Panc1 (cell line): ENCODE measurements at regions of chr9 and their contacts with region 1.

Region 1: GRCh38 chr9:83937911-83938323 is 16.7 kb upstream of the KIF27 start:
- DNase-seq: no peak
- ATAC-seq: peak; percentile 81
- H3K4me3 ChIP-seq: no peak overlapping the region
- H3K27ac ChIP-seq: no peak overlapping the region
- H3K4me1 ChIP-seq: no peaks in the 10 kb centered on the region
- H3K27me3 ChIP-seq: no peaks in the 10 kb centered on the region
- CTCF ChIP-seq: peak; percentile 68

Region 2: DNA sequence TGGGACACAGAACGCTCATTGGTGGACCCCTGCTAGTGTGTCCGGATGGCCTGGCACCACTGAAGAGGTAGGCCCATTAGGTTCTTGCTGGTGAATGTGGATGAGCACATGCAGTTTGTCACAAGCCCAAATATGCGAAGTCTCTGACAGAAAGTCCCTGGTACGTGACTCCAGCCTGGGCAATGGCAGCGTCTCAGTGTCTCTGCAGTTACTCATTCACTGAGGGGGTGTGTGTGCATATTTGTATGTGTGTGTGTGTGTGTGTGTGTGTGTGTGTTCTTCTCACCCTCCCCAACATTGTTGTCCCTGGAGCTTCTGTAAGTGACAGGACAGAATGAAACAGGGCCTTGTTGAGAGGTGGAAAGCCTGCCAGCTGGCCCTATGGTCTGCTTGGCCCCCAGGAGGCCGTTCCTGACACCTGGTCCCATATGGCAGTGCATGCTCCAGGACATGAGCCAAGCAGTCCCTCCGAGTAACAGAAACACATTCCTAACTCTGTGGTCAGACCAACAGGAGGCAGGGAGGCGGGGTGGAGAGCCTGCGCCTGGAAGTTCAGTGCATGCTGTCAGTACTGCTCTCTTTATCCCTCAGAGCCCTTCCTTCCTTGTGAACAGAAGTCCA is 232.7 kb after region 1 on chr9:
- CTCF ChIA-PET with region 1: no interaction called
- POLR2A ChIA-PET with region 1: no interaction called
- in situ Hi-C with region 1: no loop called
- intact Hi-C with region 1: loop called (anchors 5 kb)
- DNase-seq: no peak
- ATAC-seq: peak; percentile 89
- H3K4me3 ChIP-seq: no peak overlapping the region
- H3K27ac ChIP-seq: no peak overlapping the region
- H3K4me1 ChIP-seq: no peaks in the 10 kb centered on the region
- H3K27me3 ChIP-seq: no peaks in the 10 kb centered on the region
- CTCF ChIP-seq: no peak

Region 3: DNA sequence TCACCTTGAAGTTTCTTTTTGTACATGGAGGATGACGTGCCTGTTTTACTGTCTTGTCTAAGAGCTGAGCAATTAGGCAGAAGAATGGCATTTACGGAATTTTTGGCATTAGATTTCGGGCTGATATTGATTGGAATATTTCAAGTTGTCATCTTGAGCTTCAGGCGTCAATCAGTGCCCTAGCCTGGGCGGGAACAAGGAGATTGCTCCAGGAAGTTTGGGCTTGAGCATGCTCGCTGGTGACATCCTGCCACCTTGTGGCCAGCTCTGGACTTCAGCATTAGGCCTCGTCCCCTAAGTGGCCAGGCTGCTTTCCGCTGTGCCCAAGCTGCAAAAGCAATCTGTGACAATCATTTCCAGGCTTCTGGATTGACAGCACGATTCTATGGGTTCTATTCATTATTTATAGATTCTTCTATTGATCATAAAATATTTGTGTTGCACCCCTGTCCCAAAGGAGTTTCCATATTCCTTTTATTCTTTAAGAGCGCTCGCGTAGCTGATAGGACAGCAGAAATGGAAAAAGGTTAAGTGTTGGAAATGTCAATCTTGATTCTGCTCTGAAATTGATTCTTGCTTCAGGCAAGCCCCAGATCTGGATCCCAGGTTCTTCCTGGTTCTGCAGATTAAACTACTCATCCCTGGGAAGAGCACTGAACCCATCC is 323.3 kb after region 1 on chr9:
- CTCF ChIA-PET with region 1: no interaction called
- POLR2A ChIA-PET with region 1: no interaction called
- in situ Hi-C with region 1: no loop called
- intact Hi-C with region 1: loop called (anchors 2 kb)
- DNase-seq: peak; percentile 59
- ATAC-seq: peak; percentile 98
- H3K4me3 ChIP-seq: no peak overlapping the region
- H3K27ac ChIP-seq: no peak overlapping the region
- H3K4me1 ChIP-seq: no peaks in the 10 kb centered on the region
- H3K27me3 ChIP-seq: peaks cover 5% of the 10 kb centered on the region
- CTCF ChIP-seq: peak; percentile 86

Region 4: GRCh38 chr9:84315278-84315877 is 377.5 kb after region 1 on chr9:
- CTCF ChIA-PET with region 1: no interaction called
- POLR2A ChIA-PET with region 1: no interaction called
- in situ Hi-C with region 1: no loop called
- intact Hi-C with region 1: loop called (anchors 5 kb)
- DNase-seq: peak; percentile 25
- ATAC-seq: peak; percentile 69; the same call in 1 of the 2 replicates
- H3K4me3 ChIP-seq: no peak overlapping the region; a peak in 1 of 4 replicates
- H3K27ac ChIP-seq: no peak overlapping the region
- H3K4me1 ChIP-seq: no peaks in the 10 kb centered on the region
- H3K27me3 ChIP-seq: no peaks in the 10 kb centered on the region
- CTCF ChIP-seq: peak; percentile 82